RWPE1 (cell line): ENCODE measurements at regions of chr13 and their contacts with region 1.

Region 1: GRCh38 chr13:38686577-38687245 is at the start of gene FREM2:
- DNase-seq: peak; percentile 53
- H3K27ac ChIP-seq: no peak within 1 kb of the TSS
- CTCF ChIP-seq: no peak

Region 2: GRCh38 chr13:38763439-38764381 is 77.0 kb after region 1 on chr13:
- CTCF ChIA-PET with region 1: interaction called, 22 read pairs
- POLR2A ChIA-PET with region 1: no interaction called
- DNase-seq: peak; percentile 42
- H3K27ac ChIP-seq: no peak overlapping the region
- CTCF ChIP-seq: peak; percentile 63